ENCODE measurements at regions of chr1 and their contacts with region 1.

Region 1: GRCh38 chr1:185317034-185317885 is at the start of gene IVNS1ABP:
- DNase-seq: peak; percentile 94
- ATAC-seq: peak; percentile 92
- H3K4me3 Mint-ChIP-seq: peak within 1 kb of the TSS; percentile 93
- H3K27ac Mint-ChIP-seq: peak within 1 kb of the TSS; percentile 95
- H3K4me1 Mint-ChIP-seq: peaks cover 49% of the 10 kb centered on the region
- H3K27me3 Mint-ChIP-seq: no peaks in the 10 kb centered on the region
- CTCF ChIP-seq: no peak
- total RNA-seq, gene IVNS1ABP: 141 to 159 TPM (median 141 TPM) in 3 replicates

Region 2: DNA sequence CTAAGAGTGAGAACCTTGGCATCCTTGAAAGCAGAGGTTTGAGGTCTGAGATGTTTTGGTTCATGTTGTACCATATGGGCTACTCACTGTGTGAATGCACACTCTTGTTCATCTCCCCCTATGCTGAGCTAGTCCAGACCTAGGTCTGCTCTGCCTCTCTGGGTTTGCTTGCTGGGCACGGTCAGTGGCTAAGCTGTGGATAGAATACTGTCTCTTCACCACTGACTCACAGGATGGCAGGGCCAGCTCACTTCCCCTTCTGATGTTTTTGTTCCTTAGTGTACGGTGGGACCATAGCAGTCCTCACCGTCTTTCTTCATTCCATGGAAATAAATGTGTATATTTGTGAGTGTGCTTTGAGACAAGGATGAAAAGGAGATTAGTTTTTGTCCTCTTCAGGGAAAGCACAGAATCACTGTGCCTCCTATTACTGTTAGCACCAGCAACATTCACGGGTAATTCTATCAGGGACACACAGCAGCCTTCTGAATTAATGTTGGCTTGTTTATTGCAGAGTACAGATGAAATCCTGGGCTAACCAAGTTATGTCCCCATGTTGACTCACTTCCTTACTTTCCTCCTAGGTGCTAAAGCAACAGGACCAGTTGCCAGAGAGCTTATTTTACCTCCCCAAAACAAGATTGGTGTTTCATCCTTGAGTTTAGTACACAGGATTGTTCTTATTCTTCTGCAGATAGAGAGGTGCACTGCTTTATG is 56.7 kb after region 1 on chr1:
- CTCF ChIA-PET with region 1: no interaction called
- POLR2A ChIA-PET with region 1: no interaction called
- DNase-seq: no peak
- ATAC-seq: no peak; the same call in 1 of the 2 replicates
- H3K4me3 Mint-ChIP-seq: no peak overlapping the region
- H3K27ac Mint-ChIP-seq: no peak overlapping the region
- H3K4me1 Mint-ChIP-seq: peaks cover 17% of the 10 kb centered on the region
- H3K27me3 Mint-ChIP-seq: no peaks in the 10 kb centered on the region
- CTCF ChIP-seq: no peak

Region 3: GRCh38 chr1:185559684-185560331 is 242.5 kb after region 1 on chr1:
- CTCF ChIA-PET with region 1: interaction called, 31 read pairs
- POLR2A ChIA-PET with region 1: no interaction called
- DNase-seq: peak; percentile 58
- ATAC-seq: peak; percentile 100
- H3K4me3 Mint-ChIP-seq: no peak overlapping the region
- H3K27ac Mint-ChIP-seq: no peak overlapping the region
- H3K4me1 Mint-ChIP-seq: peaks cover 10% of the 10 kb centered on the region
- H3K27me3 Mint-ChIP-seq: no peaks in the 10 kb centered on the region
- CTCF ChIP-seq: no peak

Region 4: DNA sequence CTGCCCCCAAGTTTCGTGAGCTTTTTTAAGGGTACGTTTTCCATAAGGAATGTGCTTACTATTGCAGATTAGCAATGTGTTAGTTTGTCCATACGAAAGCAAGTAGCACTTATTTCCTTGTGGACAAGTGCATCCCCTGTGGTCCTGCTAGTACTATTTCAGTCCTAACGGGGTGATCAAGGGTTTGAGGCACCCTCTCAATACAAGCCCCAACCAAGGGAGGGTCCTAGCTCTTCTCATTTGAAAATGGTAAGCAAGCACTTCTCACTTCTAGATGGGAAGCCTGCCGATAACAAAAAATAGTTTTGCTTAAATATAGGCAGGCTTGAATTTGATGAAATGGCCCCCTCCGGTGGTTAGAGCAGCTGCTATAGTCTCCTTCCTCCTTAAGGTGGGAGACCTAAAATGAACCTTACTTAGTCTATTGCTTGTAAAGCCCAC is 352.9 kb after region 1 on chr1:
- CTCF ChIA-PET with region 1: interaction called, 12 read pairs
- POLR2A ChIA-PET with region 1: no interaction called
- DNase-seq: peak; percentile 50
- ATAC-seq: peak; percentile 72
- H3K4me3 Mint-ChIP-seq: no peak overlapping the region
- H3K27ac Mint-ChIP-seq: no peak overlapping the region
- H3K4me1 Mint-ChIP-seq: peaks cover 24% of the 10 kb centered on the region
- H3K27me3 Mint-ChIP-seq: no peaks in the 10 kb centered on the region
- CTCF ChIP-seq: no peak